ENCODE measurements at regions of chr16 and their contacts with region 1.

Region 1: DNA sequence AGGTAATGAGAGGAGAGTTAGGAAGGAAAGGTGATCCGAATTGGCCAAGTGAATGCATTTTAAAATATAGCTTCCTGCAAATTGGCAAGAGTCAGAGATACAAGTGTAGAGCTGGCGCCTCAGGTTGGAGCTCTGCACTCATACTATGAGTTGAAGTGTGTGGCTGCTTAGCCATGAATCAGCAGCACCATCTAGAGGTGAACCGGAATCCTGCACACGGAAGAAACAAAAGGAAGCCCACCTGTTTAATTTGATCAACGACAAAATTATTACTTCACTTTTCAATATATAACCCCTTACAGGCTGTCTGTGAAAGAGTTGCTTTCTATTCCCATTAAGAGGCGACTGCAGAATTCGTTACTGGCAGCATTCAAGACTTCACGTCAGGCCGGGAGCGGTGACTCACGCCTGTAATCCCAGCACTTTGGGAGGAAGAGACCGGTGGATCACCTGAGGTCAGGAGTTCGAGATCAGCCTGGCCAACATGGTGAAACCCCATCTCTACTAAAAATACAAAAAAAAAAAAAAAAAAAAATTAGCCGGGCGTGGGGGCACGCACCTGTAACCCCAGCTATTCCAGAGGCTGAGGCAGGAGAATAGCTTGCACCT is 1253.7 kb upstream of the CDH8 start:
- DNase-seq: no peak

Region 2: DNA sequence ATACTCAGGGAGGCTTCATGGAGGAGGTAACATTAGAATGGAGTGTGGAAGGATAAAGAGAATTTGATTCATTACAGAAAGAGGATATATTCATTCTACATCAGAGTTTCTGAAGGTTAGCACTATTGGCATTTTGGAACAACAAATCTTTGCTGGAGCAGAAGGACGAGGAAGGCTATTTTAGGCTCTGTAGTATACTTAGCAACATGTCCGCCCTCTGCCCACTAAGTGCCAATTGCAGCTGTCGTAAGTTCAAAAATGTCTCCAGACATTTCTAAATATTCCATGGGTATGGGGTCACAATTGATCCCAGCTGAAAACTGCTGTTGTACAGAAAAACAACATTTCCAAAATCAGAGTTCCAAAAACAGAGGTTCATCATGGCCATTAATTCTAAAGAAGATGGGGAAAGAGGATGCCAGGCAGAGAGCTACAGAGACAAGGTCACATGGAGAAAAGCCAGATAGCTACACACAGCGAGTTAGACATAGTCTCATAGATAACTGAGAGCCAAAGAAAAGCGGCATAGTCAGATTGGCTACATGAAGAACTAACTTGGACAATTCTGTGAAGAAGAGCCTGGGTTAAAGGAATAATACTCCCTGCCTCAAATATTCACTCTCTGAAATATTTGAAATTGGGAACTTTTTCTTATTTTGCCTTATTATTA is 407.3 kb before region 1 on chr16:
- intact Hi-C with region 1: loop called (anchors 10 kb)
- DNase-seq: no peak

Region 3: DNA sequence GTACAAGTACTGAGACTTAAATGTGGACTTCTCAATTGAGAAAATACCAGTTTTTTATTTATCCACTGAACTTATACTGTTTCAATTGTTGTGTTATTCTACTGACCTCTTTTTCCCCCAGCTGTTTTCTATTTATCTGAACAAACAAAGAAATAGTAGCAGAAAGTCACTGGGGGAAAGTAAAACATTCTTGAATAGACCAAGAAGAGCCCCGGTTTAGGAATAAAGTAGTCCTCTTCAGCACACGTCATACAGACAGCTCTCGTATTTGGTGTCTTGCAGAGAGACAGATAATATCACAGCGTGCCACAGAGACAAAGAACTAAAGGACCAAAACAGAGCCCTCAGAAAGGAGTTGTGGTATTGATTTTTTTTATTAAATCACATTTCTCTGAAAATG is 94.6 kb before region 1 on chr16:
- intact Hi-C with region 1: no loop called
- DNase-seq: no peak

Measured in cardiac septum (tissue), 1 donor.